ENCODE measurements at regions of chr10 and their contacts with region 1.

Region 1: DNA sequence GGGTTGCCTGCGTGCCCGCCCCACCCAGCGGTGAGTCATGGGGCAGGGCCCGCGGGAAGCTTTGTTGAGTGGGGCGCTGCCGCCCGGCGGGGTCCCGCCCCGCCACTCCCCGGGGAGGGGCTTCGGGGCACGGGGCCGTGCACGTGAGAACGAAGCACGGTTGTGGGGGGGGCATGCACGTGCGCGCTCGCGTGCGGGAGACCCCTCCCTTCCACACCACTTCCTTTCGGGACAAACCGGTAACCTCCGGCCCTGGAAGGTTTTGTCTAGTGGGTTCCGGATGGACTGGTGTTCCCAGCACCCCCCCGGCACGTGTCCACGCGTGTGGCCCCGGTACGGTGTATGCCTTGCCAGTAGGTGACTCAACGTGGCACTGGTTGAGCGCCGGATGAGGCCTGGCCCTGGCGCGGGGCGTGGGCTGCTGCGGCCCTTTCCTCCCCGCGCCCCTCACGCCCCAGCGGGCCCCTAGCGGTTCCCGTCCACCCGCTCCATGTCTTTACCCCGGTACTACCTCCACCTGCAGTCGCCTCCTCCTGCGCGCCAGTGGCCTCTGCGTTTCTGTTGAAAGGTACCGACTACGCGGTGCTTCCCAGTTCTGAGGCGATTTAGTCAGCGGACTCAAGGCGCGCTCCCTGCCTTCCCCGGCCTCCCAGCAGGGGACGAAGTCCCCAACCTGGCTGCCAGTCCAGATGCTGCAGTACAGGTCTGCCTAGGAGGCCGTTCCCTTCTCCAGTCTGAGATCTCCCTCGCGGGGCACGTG is 3.1 kb downstream of the ADIRF start:
- DNase-seq: peak; percentile 87 to 95 (median 91)
- ATAC-seq: peak; percentile 86
- H3K4me3 ChIP-seq: peak overlapping the region; percentile 61 to 66
- H3K4me3 Mint-ChIP-seq: peak overlapping the region; percentile 78
- H3K27ac ChIP-seq: peak overlapping the region; percentile 80 to 89
- H3K27ac Mint-ChIP-seq: peak overlapping the region; percentile 91
- H3K4me1 ChIP-seq: peaks cover 50% of the 10 kb centered on the region
- H3K4me1 Mint-ChIP-seq: peaks cover 31% of the 10 kb centered on the region
- H3K27me3 ChIP-seq: no peaks in the 10 kb centered on the region
- H3K27me3 Mint-ChIP-seq: no peaks in the 10 kb centered on the region
- CTCF ChIP-seq: no peak

Region 2: GRCh38 chr10:86755740-86756510 is 215.5 kb before region 1 on chr10:
- CTCF ChIA-PET with region 1: no interaction called
- POLR2A ChIA-PET with region 1: no interaction called
- intact Hi-C with region 1: loop called (anchors 5 to 10 kb)
- DNase-seq: peak; percentile 66 to 92 (median 85)
- ATAC-seq: peak; percentile 92
- H3K4me3 ChIP-seq: peak overlapping the region; percentile 72 to 77
- H3K4me3 Mint-ChIP-seq: peak overlapping the region; percentile 86
- H3K27ac ChIP-seq: peak overlapping the region in 1 of 2 experiments; percentile 45
- H3K27ac Mint-ChIP-seq: no peak overlapping the region
- H3K4me1 ChIP-seq: peaks cover 15% of the 10 kb centered on the region
- H3K4me1 Mint-ChIP-seq: peaks cover 31% of the 10 kb centered on the region
- H3K27me3 ChIP-seq: peaks cover 0 to 4% of the 10 kb centered on the region in 2 experiments
- H3K27me3 Mint-ChIP-seq: peaks cover 17% of the 10 kb centered on the region
- CTCF ChIP-seq: no peak

Region 3: GRCh38 chr10:87058171-87058570 is 86.8 kb after region 1 on chr10:
- CTCF ChIA-PET with region 1: no interaction called
- POLR2A ChIA-PET with region 1: no interaction called
- intact Hi-C with region 1: no loop called
- DNase-seq: no peak
- ATAC-seq: no peak
- H3K4me3 ChIP-seq: no peak overlapping the region
- H3K4me3 Mint-ChIP-seq: no peak overlapping the region
- H3K27ac ChIP-seq: no peak overlapping the region
- H3K27ac Mint-ChIP-seq: no peak overlapping the region
- H3K4me1 ChIP-seq: no peaks in the 10 kb centered on the region
- H3K4me1 Mint-ChIP-seq: no peaks in the 10 kb centered on the region
- H3K27me3 ChIP-seq: no peaks in the 10 kb centered on the region
- H3K27me3 Mint-ChIP-seq: no peaks in the 10 kb centered on the region
- CTCF ChIP-seq: no peak

Measured in CD8-positive, alpha-beta T cell (primary cell).